Activated T-helper 1 cell treated with anti-CD3 and anti-CD28 coated beads, Interleukin-12 subunit alpha, Interleukin-12 subunit beta, Interleukin-2, Interleukin-4 antibody, amounts not matched to agents 30 ng/mL and 10 ng/mL and 1 ng/mL, durations not matched to agents 14 hours and 24 hours and 36 hours (primary cell): ENCODE measurements at regions of chr16 and their contacts with region 1.

Region 1: GRCh38 chr16:11328172-11329070 is 16.8 kb upstream of the RMI2 start:
- DNase-seq: peak; percentile 55
- H3K4me3 Mint-ChIP-seq: peak overlapping the region; percentile 68
- H3K27ac Mint-ChIP-seq: peak overlapping the region; percentile 74
- H3K4me1 Mint-ChIP-seq: peaks cover 69% of the 10 kb centered on the region
- H3K27me3 Mint-ChIP-seq: peaks cover 5% of the 10 kb centered on the region

Region 2: GRCh38 chr16:11345040-11345862 is 16.8 kb after region 1 on chr16 and contains the start of gene RMI2:
- intact Hi-C with region 1: loop called (anchors 1 kb)
- DNase-seq: peak; percentile 97
- H3K4me3 Mint-ChIP-seq: peak within 1 kb of the TSS; percentile 93
- H3K27ac Mint-ChIP-seq: peak within 1 kb of the TSS; percentile 83
- H3K4me1 Mint-ChIP-seq: peaks cover 58% of the 10 kb centered on the region
- H3K27me3 Mint-ChIP-seq: peaks cover 4% of the 10 kb centered on the region
- total RNA-seq, gene RMI2: 49.8 and 55.7 TPM in 2 replicates

Region 3: GRCh38 chr16:11431915-11432465 is 103.6 kb after region 1 on chr16:
- intact Hi-C with region 1: no loop called
- DNase-seq: no peak
- H3K4me3 Mint-ChIP-seq: no peak overlapping the region
- H3K27ac Mint-ChIP-seq: no peak overlapping the region
- H3K4me1 Mint-ChIP-seq: no peaks in the 10 kb centered on the region
- H3K27me3 Mint-ChIP-seq: peaks cover 7% of the 10 kb centered on the region